Activated CD4-positive, alpha-beta memory T cell treated with anti-CD3 and anti-CD28 coated beads for 36 hours (primary cell): ENCODE measurements at regions of chr7 and their contacts with region 1.

Region 1: GRCh38 chr7:99408379-99409191 is at the starts of genes BUD31 and PDAP1:
- DNase-seq: peak; percentile 97
- H3K4me3 Mint-ChIP-seq: peak within 1 kb of the TSS; percentile 99
- H3K27ac Mint-ChIP-seq: peak within 1 kb of the TSS; percentile 99
- H3K4me1 Mint-ChIP-seq: peaks cover 41% of the 10 kb centered on the region
- H3K27me3 Mint-ChIP-seq: no peaks in the 10 kb centered on the region
- total RNA-seq, gene BUD31: 143 to 149 TPM
- total RNA-seq, gene PDAP1: 149 to 162 TPM

Region 2: GRCh38 chr7:99374103-99375064 is 34.2 kb before region 1 on chr7 and contains the start of gene ARPC1B:
- CTCF ChIA-PET with region 1: interaction called, 4 read pairs
- POLR2A ChIA-PET with region 1: interaction called, 27 read pairs
- intact Hi-C with region 1: loop called (anchors 1 kb)
- DNase-seq: peak; percentile 92
- H3K4me3 Mint-ChIP-seq: peak within 1 kb of the TSS; percentile 84
- H3K27ac Mint-ChIP-seq: peak within 1 kb of the TSS; percentile 86
- H3K4me1 Mint-ChIP-seq: peaks cover 32% of the 10 kb centered on the region
- H3K27me3 Mint-ChIP-seq: no peaks in the 10 kb centered on the region
- total RNA-seq, gene ARPC1B: 432 to 435 TPM

Region 3: GRCh38 chr7:99380032-99380822 is 28.4 kb before region 1 on chr7:
- CTCF ChIA-PET with region 1: interaction called, 4 read pairs
- POLR2A ChIA-PET with region 1: interaction called, 27 read pairs
- intact Hi-C with region 1: loop called (anchors 1 kb)
- DNase-seq: peak; percentile 68
- H3K4me3 Mint-ChIP-seq: peak overlapping the region; percentile 81
- H3K27ac Mint-ChIP-seq: peak overlapping the region; percentile 97
- H3K4me1 Mint-ChIP-seq: peaks cover 66% of the 10 kb centered on the region
- H3K27me3 Mint-ChIP-seq: no peaks in the 10 kb centered on the region

Region 4: DNA sequence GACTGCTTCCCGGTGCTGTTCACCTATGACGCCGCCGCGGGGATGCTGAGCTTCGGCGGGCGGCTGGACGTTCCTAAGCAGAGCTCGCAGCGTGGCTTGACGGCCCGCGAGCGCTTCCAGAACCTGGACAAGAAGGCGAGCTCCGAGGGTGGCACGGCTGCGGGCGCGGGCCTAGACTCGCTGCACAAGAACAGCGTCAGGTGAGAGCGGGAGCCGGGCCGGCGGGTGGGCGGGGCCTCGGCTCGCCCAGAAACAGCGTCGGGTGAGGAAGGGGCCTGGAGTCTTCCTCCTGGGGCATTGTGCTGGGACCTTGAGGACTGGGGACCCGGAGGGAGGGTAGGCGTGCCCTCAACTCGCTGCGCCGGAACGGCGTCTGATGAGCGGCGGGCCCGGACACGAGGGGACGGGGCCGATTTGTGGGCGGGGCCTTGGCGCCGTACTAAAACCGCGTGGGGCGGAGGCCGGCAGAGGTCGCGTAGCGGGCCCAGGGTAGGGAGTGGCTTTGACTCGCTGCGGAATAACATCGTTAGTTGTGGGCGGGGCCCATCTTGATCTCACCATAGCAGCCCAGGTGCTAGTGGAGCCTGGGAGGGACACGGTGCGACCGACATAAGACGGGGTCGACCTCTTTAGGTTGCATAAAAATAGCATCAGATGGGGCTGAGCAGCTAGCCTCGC is 15.8 kb before region 1 on chr7:
- CTCF ChIA-PET with region 1: interaction called, 3 read pairs
- POLR2A ChIA-PET with region 1: interaction called, 8 read pairs
- intact Hi-C with region 1: loop called (anchors 2 kb)
- DNase-seq: peak; percentile 86
- H3K4me3 Mint-ChIP-seq: peak overlapping the region; percentile 55
- H3K27ac Mint-ChIP-seq: peak overlapping the region; percentile 76
- H3K4me1 Mint-ChIP-seq: peaks cover 17% of the 10 kb centered on the region
- H3K27me3 Mint-ChIP-seq: no peaks in the 10 kb centered on the region

Region 5: GRCh38 chr7:99438573-99439480 is 30.2 kb after region 1 on chr7 and contains the starts of genes CPSF4 and PTCD1:
- CTCF ChIA-PET with region 1: no interaction called
- POLR2A ChIA-PET with region 1: interaction called, 7 read pairs
- intact Hi-C with region 1: loop called (anchors 1 kb)
- DNase-seq: peak; percentile 96
- H3K4me3 Mint-ChIP-seq: peak within 1 kb of the TSS; percentile 99
- H3K27ac Mint-ChIP-seq: peak within 1 kb of the TSS; percentile 95
- H3K4me1 Mint-ChIP-seq: peaks cover 35% of the 10 kb centered on the region
- H3K27me3 Mint-ChIP-seq: no peaks in the 10 kb centered on the region
- total RNA-seq, gene CPSF4: 57.7 to 60.3 TPM
- total RNA-seq, gene PTCD1: 7.4 TPM

Region 6: GRCh38 chr7:99459087-99459486 is 50.5 kb after region 1 on chr7:
- CTCF ChIA-PET with region 1: no interaction called
- POLR2A ChIA-PET with region 1: no interaction called
- intact Hi-C with region 1: no loop called
- DNase-seq: peak; percentile 47
- H3K4me3 Mint-ChIP-seq: no peak overlapping the region
- H3K27ac Mint-ChIP-seq: no peak overlapping the region
- H3K4me1 Mint-ChIP-seq: peaks cover 31% of the 10 kb centered on the region
- H3K27me3 Mint-ChIP-seq: no peaks in the 10 kb centered on the region

Region 7: DNA sequence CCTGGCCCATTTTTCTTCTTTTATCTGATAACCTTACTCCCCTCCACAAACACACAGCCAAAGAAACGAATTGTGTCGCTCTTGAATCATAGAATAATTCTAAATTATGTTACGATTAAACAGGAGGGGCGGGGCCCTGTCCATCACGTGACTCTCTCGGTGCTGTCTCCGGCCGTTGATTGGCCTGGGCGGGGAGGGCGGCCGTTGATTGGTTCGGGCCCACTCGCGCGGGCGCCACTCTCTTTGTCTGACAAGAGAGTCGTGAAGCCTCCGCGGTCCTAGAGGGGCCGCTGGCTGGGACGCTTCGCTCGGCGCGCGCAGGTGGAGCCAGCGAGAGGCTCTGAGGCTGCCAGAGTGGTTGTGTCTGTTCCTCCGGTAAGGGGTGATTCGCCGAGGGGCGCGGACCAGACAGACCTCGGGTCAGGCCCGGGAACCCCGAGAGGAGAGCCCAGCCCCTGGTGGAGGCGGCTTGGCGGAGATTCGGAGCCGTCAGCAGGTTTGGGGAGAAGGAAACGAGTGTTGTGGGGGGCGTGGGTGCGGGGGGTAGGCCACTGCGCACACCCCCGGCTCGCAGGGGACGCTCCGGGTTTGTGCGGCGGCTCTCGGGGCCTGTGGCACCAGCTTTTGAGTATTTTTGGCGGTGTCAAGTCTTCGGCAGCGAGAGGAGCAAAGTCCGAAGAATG is 64.1 kb after region 1 on chr7 and contains the start of gene ZNF789:
- CTCF ChIA-PET with region 1: no interaction called
- POLR2A ChIA-PET with region 1: interaction called, 4 read pairs
- intact Hi-C with region 1: loop called (anchors 2 kb)
- DNase-seq: peak; percentile 99
- H3K4me3 Mint-ChIP-seq: peak within 1 kb of the TSS; percentile 100
- H3K27ac Mint-ChIP-seq: peak within 1 kb of the TSS; percentile 88
- H3K4me1 Mint-ChIP-seq: peaks cover 33% of the 10 kb centered on the region
- H3K27me3 Mint-ChIP-seq: no peaks in the 10 kb centered on the region
- total RNA-seq, gene ZNF789: 14.2 to 15.6 TPM

Region 8: DNA sequence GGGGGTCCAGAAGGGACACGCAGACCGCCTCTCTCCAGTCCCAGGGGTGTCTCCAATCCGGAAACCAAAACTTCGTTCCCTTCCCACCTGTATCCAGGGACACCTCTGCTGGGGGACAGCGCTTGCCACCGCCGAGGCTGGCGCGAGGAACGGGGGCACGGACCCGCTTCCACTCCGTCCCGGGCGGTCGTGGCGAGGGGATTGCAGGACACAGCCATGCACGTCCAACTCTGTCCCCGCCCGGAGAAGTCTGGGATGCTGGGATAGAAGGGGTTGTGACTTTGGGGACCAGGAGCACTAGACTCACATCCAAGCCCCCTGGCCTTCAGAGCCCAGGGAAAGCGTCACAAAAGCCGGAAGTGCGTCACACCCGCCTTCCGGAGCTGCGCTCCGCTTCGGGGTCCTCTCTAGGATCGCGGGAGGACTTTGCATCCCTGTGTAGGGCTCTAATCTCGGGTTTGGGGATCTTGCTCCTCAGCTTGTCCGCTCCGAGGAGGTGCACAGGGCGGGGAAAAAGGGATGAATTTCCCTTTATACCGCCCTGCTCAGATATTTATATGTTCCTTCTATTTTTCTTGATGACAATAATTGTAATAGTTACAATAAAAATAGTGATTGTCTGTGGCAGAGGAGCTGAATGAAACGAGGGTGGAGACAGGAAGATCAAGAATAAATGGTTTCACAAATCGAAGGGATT is 143.3 kb after region 1 on chr7 and contains the start of gene FAM200A:
- CTCF ChIA-PET with region 1: no interaction called
- POLR2A ChIA-PET with region 1: interaction called, 7 read pairs
- intact Hi-C with region 1: loop called (anchors 10 kb)
- DNase-seq: peak; percentile 89
- H3K4me3 Mint-ChIP-seq: peak within 1 kb of the TSS; percentile 91
- H3K27ac Mint-ChIP-seq: peak within 1 kb of the TSS; percentile 71
- H3K4me1 Mint-ChIP-seq: peaks cover 26% of the 10 kb centered on the region
- H3K27me3 Mint-ChIP-seq: no peaks in the 10 kb centered on the region
- total RNA-seq, gene FAM200A: 4.0 to 4.8 TPM